ENCODE measurements at regions of chr5 and their contacts with region 1.

Region 1: DNA sequence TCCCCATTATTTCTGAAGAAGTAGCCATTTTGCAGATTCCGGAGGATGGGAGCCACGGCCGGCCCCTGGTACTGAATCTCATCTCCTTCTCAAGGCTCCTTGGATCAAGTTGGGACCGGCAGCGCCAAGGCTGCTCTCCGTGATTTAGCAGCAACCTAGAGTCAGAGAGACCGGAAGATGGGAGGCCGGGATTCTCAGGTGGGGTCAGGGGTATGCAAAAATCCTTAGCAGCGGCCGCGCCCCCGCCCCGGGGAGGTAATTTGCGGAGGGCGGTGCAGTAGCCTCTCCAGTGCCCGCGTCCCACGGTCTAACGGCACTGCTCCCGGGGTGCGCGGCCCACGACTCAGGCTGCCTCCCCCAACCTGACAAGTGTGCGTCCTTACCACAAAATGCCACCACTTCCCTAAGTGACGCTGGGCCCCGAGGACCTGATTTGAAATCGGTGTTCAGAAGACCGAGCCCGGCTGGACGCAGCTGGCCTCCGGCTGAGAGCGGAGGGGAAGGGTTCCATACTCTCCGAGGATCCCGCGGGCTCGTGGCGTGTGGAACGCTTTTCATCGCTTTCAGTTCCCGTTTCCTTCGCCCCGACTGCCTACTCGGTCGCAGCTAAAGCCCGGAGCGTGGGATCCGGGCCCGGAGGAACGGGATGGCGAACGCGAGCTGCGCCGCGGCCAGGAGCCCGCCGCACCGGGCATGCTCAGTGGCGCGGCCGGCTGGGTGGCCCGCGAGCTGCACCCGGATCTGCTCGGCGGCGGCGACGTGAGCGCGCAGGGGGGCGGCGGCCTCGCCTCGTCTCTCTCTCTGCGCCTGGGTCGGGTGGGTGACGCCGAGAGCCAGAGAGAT is at the start of gene SCAMP1:
- DNase-seq: peak; percentile 96
- ATAC-seq: peak; percentile 98
- total RNA-seq, gene SCAMP1: 29.5 TPM

Region 2: GRCh38 chr5:78294248-78295034 is 65.6 kb before region 1 on chr5 and contains the start of gene AP3B1:
- intact Hi-C with region 1: loop called (anchors 1 kb)
- DNase-seq: peak; percentile 100
- ATAC-seq: peak; percentile 98
- total RNA-seq, gene AP3B1: 21.3 TPM

Measured in Right ventricle myocardium inferior (tissue), 1 donor.